Posterior vena cava (tissue), 2 donors: ENCODE measurements at regions of chr12 and their contacts with region 1.

Region 1: GRCh38 chr12:29024117-29024516 is 125.0 kb upstream of the FAR2 start:
- DNase-seq: no peak

Region 2: GRCh38 chr12:27396216-27396815 is 1627.8 kb before region 1 on chr12:
- intact Hi-C with region 1: loop called in 1 of 2 experiments (anchors 5 kb)
- DNase-seq: no peak

Region 3: DNA sequence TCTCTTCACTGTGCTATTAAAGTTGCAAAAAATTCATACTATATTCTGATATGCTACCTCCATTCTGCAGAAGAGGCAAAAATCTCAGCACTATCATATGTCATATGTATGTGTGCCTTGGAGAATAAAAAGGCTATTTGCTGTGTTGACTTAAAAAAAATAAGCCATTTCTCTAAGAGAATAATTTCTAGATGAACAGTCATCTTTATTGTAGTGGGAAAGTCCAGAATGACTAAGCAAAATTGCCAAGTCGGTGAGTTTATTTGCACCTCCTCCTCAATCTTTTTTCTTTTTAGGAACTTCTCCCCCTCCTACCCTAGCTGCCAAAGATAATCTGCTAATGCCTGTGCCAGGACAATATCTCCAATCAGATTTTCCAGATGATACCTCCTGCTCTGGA is 228.8 kb before region 1 on chr12:
- intact Hi-C with region 1: no loop called
- DNase-seq: no peak